ENCODE measurements at regions of chr9 and their contacts with region 1.

Region 1: DNA sequence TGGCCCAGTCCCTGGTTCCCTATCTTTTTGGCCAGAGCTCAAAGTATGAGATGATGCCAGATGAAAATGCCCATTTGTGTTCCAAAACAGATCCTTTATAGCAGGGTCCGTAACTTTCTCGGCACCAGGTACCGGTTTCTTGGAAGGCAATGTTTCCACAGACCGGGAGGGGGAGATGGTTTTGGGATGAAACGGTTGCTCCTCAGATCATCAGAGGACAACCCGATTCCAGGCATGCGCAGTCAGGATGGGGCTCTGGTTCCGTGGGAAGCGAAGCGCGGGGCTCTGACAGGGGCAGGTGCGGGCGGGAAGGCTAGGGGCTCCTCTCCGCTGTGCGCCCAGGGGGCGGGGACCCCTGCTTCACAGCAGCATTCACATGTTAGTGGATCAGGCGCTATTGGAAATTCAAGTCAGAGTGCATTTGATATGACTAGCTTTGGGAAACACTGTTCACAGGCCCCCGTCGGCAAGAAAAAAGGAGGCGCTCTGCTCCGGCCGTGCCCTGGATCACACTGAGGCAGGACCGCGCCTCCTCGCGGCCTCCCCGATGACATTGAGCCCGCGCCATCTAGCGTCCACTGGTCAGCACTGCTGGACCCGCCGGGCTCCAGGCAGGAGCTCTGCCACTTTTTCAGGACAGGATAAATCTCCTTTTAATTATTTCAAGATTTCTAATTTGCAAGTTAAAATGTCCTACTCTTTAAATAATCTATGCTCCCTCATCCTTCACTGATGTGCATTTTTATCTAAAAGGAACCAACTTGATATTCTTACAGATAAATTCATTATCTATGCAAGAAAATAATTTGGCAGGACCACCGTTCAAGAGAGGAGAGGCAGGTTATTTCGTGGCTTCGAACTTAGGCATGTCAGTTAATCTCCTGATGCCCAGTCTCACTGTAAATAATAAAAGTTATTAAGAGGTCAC is 190.0 kb downstream of the FANCC start:
- ATAC-seq: peak; percentile 78 to 97 (median 88)
- H3K4me3 ChIP-seq: peak overlapping the region in 4 of 5 donors; percentile 2 to 14 (median 4)
- H3K27ac ChIP-seq: no peak overlapping the region
- H3K4me1 ChIP-seq: peaks cover 29 to 50% of the 10 kb centered on the region in 2 donors

Region 2: GRCh38 chr9:94675008-94675881 is 452.3 kb before region 1 on chr9:
- in situ Hi-C with region 1: loop called in 4 of 9 experiments (anchors 10 to 25 kb)
- ATAC-seq: no peak
- H3K4me3 ChIP-seq: no peak overlapping the region
- H3K27ac ChIP-seq: no peak overlapping the region
- H3K4me1 ChIP-seq: peaks cover 0 to 10% of the 10 kb centered on the region in 2 donors

Region 3: DNA sequence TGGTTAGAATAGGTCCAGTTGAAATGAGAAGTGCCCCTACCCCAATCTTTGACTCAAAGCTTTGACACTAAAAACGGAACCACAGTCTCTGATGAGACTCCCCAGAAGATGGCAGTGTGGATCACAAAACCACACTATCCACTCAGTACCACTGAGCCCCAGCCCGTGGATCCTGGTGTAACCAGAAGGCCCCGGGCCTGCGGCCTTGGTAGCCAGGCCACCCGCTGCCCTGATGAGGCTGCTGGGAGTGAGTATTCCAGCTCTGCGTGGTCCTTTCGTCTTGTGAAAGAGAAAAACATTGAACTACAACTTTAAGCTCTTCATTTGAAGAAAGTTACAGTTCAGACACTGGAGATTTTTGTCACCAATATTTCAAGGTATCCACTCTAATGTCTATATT is 446.0 kb before region 1 on chr9:
- in situ Hi-C with region 1: loop called in 4 of 9 experiments (anchors 10 to 25 kb)
- ATAC-seq: peak; percentile 93 to 100 (median 98)
- H3K4me3 ChIP-seq: no peak overlapping the region
- H3K27ac ChIP-seq: no peak overlapping the region
- H3K4me1 ChIP-seq: no peaks in the 10 kb centered on the region

Region 4: GRCh38 chr9:94772639-94773303 is 354.7 kb before region 1 on chr9:
- in situ Hi-C with region 1: loop called in 3 of 9 experiments (anchors 10 to 25 kb)
- ATAC-seq: peak in 7 of 8 experiments; percentile 23 to 95 (median 84)
- H3K4me3 ChIP-seq: no peak overlapping the region
- H3K27ac ChIP-seq: peak overlapping the region in 1 of 2 donors; percentile 45
- H3K4me1 ChIP-seq: peaks cover 10 to 16% of the 10 kb centered on the region in 2 donors

Region 5: DNA sequence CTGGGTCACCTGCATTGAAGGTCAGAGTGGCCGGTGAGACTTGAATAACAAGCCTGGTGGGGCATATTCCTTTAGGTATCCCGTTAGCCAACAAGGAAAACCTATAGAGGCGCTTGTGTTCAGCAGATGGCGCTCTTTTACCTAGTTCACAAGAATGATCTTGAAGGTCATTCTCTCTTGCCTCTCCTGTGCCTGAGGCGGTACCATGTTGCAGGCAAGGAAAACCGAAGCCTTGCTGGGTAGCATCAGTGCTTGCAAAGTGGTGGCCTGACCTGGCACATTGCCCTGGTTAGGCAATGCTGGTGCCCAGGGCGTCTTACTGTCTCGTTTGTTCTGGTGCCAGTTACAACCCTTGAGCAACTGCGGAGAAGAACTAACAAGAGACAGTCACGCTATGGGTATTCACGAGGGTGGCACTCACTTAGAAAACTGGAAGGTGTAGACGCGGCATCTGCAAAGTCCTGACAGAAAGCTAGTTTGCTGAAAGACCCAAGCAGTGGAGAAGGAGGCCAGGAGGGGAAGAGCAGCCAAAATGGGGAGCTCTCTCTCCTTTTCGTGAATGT is 344.3 kb before region 1 on chr9:
- in situ Hi-C with region 1: loop called in 3 of 9 experiments (anchors 10 to 25 kb)
- ATAC-seq: peak; percentile 79 to 97 (median 94)
- H3K4me3 ChIP-seq: no peak overlapping the region
- H3K27ac ChIP-seq: no peak overlapping the region
- H3K4me1 ChIP-seq: peaks cover 0 to 2% of the 10 kb centered on the region in 2 donors

Measured in motor neuron (in vitro differentiated cells).